ENCODE measurements at regions of chr11 and their contacts with region 1.

Region 1: GRCh38 chr11:32792948-32793475 is 1.4 kb downstream of the CCDC73 start:
- DNase-seq: peak; percentile 74
- ATAC-seq: peak; percentile 81
- H3K4me3 Mint-ChIP-seq: peak overlapping the region; percentile 32
- H3K27ac Mint-ChIP-seq: no peak overlapping the region
- H3K4me1 Mint-ChIP-seq: peaks cover 4% of the 10 kb centered on the region
- H3K27me3 Mint-ChIP-seq: peaks cover 16% of the 10 kb centered on the region

Region 2: GRCh38 chr11:32323814-32324130 is 469.2 kb before region 1 on chr11:
- CTCF ChIA-PET with region 1: interaction called, 14 read pairs
- POLR2A ChIA-PET with region 1: no interaction called
- DNase-seq: no peak
- ATAC-seq: no peak
- H3K4me3 Mint-ChIP-seq: no peak overlapping the region
- H3K27ac Mint-ChIP-seq: no peak overlapping the region
- H3K4me1 Mint-ChIP-seq: no peaks in the 10 kb centered on the region
- H3K27me3 Mint-ChIP-seq: peaks cover 23% of the 10 kb centered on the region

Region 3: DNA sequence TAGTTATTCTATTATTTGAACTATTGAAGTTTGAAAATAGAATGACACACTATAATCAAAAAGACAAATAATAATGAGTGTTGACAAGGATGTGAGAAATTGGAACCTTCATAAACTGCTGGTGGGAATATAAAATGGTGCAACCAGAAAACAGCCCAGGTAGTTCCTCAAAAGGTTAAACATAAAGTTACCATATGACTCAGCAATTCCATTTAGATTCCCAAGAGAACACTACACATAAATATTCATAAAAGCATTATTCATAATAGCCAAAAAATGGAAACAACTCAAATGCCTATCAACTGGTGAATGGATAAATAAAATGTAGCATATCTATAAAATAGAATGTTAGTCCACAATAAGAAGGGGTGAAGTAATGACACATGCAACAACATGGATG is 20.3 kb before region 1 on chr11:
- CTCF ChIA-PET with region 1: no interaction called
- POLR2A ChIA-PET with region 1: no interaction called
- DNase-seq: no peak
- ATAC-seq: no peak
- H3K4me3 Mint-ChIP-seq: no peak overlapping the region
- H3K27ac Mint-ChIP-seq: no peak overlapping the region
- H3K4me1 Mint-ChIP-seq: peaks cover 11% of the 10 kb centered on the region
- H3K27me3 Mint-ChIP-seq: no peaks in the 10 kb centered on the region

Region 4: GRCh38 chr11:32870676-32871075 is 77.7 kb after region 1 on chr11:
- CTCF ChIA-PET with region 1: no interaction called
- POLR2A ChIA-PET with region 1: no interaction called
- DNase-seq: peak; percentile 43
- ATAC-seq: no peak
- H3K4me3 Mint-ChIP-seq: no peak overlapping the region
- H3K27ac Mint-ChIP-seq: no peak overlapping the region
- H3K4me1 Mint-ChIP-seq: no peaks in the 10 kb centered on the region
- H3K27me3 Mint-ChIP-seq: peaks cover 30% of the 10 kb centered on the region

Measured in activated CD8-positive, alpha-beta T cell treated with anti-CD3 and anti-CD28 coated beads, Interleukin-2, amount 10 ng/mL, durations not matched to agents 7 days and 5 days (primary cell).